HEK293T (cell line): ENCODE measurements at regions of chr14 and their contacts with region 1.

Region 1: GRCh38 chr14:52552063-52552988 is at the starts of genes GPR137C and TXNDC16:
- DNase-seq: peak; percentile 93

Region 2: DNA sequence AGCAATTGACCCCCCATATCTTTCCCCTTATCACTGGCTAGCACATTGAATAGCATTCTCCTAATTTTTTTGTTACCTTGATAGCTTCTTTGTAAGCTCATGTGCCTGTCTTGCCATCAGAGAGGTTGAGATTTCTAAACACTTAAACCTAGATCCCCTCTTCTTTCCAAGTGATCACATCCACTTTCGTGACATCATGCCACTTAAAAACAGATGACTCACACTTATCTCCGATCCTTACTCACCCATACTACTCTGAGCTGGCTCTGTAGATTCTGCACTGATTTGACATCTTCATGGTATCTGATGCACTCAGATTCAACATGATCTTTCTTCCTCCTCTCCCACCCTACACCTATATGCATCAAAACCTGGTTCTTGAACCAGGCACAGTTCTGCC is 10.8 kb after region 1 on chr14:
- CTCF ChIA-PET with region 1: no interaction called
- POLR2A ChIA-PET with region 1: interaction called, 18 read pairs
- DNase-seq: no peak